Natural killer cell (primary cell): ENCODE measurements at regions of chr7 and their contacts with region 1.

Region 1: GRCh38 chr7:131688738-131689661 is 132.6 kb upstream of the PODXL start:
- DNase-seq: peak; percentile 51 to 69
- ATAC-seq: peak; percentile 71 to 94 (median 86)
- H3K4me3 ChIP-seq: no peak overlapping the region
- H3K4me3 Mint-ChIP-seq: no peak overlapping the region
- H3K27ac ChIP-seq: no peak overlapping the region
- H3K27ac Mint-ChIP-seq: no peak overlapping the region
- H3K4me1 ChIP-seq: no peaks in the 10 kb centered on the region
- H3K4me1 Mint-ChIP-seq: peaks cover 0 to 14% of the 10 kb centered on the region in 2 donors
- H3K27me3 ChIP-seq: no peaks in the 10 kb centered on the region
- H3K27me3 Mint-ChIP-seq: peaks cover 22 to 23% of the 10 kb centered on the region in 2 donors
- CTCF ChIP-seq: peak; percentile 79

Region 2: DNA sequence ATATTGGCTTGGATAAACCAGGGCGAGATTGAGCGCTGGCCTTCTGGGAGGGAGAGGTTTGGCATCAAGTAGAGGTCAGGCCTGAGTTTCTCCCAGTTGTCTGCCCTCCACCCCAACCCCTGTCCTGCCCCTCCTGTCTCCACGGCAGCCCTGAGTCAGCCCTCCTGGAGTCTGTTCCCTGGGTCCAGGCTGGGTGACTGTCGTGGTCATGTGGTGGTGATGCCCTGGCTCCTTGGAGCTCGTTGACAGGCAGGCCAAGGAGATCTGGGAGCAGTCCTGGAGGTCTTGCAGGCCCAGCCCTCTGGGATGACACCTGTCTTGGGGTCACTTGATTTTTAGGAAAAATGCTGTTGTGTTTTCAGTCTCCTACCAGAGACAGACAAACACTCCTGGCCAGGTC is 79.0 kb before region 1 on chr7:
- intact Hi-C with region 1: no loop called
- DNase-seq: no peak
- ATAC-seq: no peak
- H3K4me3 ChIP-seq: no peak overlapping the region
- H3K4me3 Mint-ChIP-seq: no peak overlapping the region
- H3K27ac ChIP-seq: no peak overlapping the region
- H3K27ac Mint-ChIP-seq: no peak overlapping the region
- H3K4me1 ChIP-seq: peaks cover 25% of the 10 kb centered on the region
- H3K4me1 Mint-ChIP-seq: peaks cover 14 to 25% of the 10 kb centered on the region in 2 donors
- H3K27me3 ChIP-seq: peaks cover 9% of the 10 kb centered on the region
- H3K27me3 Mint-ChIP-seq: peaks cover 11% of the 10 kb centered on the region in 2 donors
- CTCF ChIP-seq: no peak

Region 3: DNA sequence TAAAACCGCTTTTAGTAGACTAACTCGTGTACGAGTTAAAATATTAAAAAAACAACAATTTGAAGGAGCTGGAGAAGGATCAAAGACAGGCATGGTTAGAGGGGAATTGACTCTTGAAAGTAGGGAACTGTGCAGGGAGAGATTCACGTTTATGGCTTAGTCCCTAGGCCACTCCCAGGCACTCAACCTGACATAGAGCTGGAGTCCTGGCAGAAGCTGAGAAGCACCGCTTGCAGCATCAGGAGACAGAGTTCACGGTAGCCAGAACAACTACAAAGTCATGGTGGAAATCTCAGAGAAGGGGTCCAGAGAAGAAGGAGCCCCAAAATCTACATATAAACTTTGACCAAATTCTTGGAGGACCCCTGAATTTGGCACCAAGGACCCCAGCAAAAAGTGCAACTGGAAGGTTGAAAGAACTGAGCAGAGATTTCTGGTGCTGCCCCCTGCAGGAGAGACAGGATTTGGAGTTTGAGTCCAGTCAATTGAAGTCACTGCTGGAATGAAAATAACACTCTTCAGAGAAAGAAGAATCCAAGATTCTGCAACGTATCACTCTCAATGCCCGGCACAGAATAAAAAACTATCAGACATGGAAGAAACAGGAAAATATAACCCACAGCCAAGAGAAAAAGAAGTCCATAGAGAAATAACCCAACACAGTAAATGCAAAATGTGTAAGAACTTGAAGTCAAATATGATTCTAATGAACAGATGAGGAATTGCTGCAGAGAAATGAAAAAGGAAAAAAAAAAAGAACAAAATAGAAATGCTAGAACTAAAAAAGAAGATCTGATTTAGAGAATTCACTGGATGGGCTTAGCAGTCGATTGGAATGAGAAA is 360.7 kb after region 1 on chr7:
- intact Hi-C with region 1: loop called (anchors 2 kb)
- DNase-seq: peak in 1 of 2 donors; percentile 7
- ATAC-seq: no peak
- H3K4me3 ChIP-seq: no peak overlapping the region
- H3K4me3 Mint-ChIP-seq: no peak overlapping the region
- H3K27ac ChIP-seq: no peak overlapping the region
- H3K27ac Mint-ChIP-seq: no peak overlapping the region
- H3K4me1 ChIP-seq: no peaks in the 10 kb centered on the region
- H3K4me1 Mint-ChIP-seq: no peaks in the 10 kb centered on the region
- H3K27me3 ChIP-seq: no peaks in the 10 kb centered on the region
- H3K27me3 Mint-ChIP-seq: peaks cover 3 to 18% of the 10 kb centered on the region in 2 donors
- CTCF ChIP-seq: peak; percentile 28